Sigmoid colon (tissue), 7 donors: ENCODE measurements at regions of chr6 and their contacts with region 1.

Region 1: DNA sequence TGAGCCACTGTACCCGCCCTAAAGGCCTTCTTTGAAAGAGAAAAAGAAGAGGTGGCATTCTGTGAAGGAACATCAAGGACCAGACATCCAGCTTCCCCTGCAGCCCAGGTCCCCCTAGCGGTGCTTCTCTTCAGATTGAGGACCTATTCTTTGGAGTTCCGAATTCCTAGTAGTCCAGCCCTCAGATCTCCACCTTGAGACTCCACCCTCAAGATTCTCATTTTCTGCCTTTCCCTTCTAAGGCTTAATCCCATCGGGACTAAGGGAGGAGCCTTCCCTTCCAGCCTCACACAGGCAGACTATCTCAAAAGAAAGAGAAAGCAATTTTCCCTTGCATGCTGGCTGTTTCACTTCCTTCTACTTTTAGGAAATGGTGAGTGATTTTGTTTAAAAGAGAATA is 32.5 kb downstream of the MUC22 start:
- DNase-seq: no peak
- H3K4me3 ChIP-seq: no peak overlapping the region
- H3K27ac ChIP-seq: peak overlapping the region in 1 of 4 donors; percentile 28
- H3K4me1 ChIP-seq: no peaks in the 10 kb centered on the region
- H3K27me3 ChIP-seq: peaks cover 0 to 8% (median 6%) of the 10 kb centered on the region in 3 donors
- CTCF ChIP-seq: peak in 2 of 4 experiments; percentile 17
- EP300 ChIP-seq: no peak
- POLR2A ChIP-seq: no peak

Region 2: GRCh38 chr6:30700340-30700739 is 342.5 kb before region 1 on chr6:
- intact Hi-C with region 1: no loop called
- DNase-seq: no peak
- H3K4me3 ChIP-seq: no peak overlapping the region
- H3K27ac ChIP-seq: no peak overlapping the region
- H3K4me1 ChIP-seq: no peaks in the 10 kb centered on the region
- H3K27me3 ChIP-seq: no peaks in the 10 kb centered on the region
- CTCF ChIP-seq: no peak
- EP300 ChIP-seq: no peak
- POLR2A ChIP-seq: no peak

Region 3: DNA sequence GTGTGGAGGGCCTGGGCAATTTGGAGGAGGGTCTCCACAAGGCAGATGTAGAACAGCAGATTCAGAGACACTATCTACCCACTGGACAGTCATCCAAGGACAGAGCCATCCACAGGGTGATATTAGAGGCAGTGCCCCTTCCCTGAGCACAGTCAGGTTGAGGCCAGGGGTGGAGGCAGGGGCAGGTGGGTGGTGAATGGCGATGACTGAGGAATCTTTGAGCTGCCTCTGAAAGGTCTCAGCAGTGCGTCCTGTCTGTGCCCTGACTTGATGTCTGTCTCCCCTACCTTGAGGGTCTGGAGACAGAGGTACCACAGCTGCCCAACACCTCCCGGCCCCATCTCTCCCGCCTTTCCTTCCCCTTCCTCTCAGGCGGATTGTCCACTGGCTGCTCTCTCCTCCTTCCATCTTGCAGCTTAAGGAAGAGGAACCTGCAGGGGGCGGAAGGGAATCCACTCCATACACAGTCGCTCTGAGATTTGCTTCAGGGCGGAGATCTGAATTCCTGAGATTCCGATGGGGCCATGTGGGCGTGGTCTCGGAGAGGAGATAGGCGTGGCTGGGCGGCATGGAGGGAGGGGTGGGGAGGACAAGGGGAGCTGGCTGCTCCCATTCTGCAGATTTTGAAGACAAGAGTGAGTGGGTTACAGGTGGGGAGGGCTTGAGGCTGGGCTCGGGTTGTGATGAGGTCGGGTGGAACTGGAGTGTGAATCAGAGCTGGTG is 100.3 kb before region 1 on chr6:
- intact Hi-C with region 1: loop called (anchors 10 kb)
- DNase-seq: peak; percentile 71
- H3K4me3 ChIP-seq: no peak overlapping the region
- H3K27ac ChIP-seq: no peak overlapping the region
- H3K4me1 ChIP-seq: peaks cover 0 to 8% (median 3%) of the 10 kb centered on the region in 4 donors
- H3K27me3 ChIP-seq: peaks cover 0 to 10% (median 0%) of the 10 kb centered on the region in 3 donors
- CTCF ChIP-seq: peak in 2 of 4 experiments; percentile 6 to 23
- EP300 ChIP-seq: no peak
- POLR2A ChIP-seq: no peak